ENCODE measurements at regions of chrX and their contacts with region 1.

Region 1: DNA sequence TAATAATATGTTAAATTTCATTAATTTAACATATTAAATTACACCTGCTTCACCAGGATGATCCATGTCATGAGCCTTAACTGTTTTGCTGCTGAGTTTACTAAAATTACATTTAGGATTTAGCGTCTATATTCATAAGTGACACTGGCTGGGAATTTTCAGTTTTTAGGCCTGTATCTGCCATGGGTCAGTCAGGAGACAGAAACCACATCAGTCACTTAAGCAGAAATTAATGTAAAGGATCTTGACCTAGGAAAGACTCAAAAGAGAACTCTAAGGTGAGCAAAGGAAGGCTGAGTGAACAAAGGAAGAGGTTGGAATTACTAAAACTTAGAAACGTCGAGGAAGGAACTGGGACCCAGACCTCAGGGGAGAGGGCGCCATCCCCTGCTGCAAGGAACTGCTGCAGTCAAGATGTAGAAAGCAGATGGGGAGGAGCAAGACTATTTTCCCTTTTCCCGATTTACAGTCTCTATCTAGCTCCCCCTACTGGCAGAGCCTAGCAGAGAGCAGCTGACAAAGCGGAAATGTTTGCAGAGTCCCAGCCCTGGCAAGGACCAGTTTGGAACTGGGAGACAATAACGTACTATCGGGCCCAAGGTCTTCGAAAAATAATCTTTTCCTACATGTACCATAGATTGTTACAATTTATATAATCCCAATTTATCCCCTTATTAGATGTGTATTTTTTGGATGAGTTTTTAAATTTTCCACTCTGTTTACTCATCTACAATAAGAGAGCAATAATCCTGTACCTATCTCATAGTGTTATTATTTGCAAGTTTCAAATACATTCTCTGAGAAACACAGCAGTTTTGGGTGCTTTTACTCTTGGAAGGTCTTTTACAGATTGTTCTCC is 22.6 kb upstream of the RBBP7 start:
- DNase-seq: peak; percentile 71 to 77
- ATAC-seq: peak; percentile 88
- H3K4me3 ChIP-seq: no peak overlapping the region
- H3K27ac ChIP-seq: no peak overlapping the region
- H3K4me1 ChIP-seq: no peaks in the 10 kb centered on the region
- H3K27me3 ChIP-seq: no peaks in the 10 kb centered on the region

Region 2: DNA sequence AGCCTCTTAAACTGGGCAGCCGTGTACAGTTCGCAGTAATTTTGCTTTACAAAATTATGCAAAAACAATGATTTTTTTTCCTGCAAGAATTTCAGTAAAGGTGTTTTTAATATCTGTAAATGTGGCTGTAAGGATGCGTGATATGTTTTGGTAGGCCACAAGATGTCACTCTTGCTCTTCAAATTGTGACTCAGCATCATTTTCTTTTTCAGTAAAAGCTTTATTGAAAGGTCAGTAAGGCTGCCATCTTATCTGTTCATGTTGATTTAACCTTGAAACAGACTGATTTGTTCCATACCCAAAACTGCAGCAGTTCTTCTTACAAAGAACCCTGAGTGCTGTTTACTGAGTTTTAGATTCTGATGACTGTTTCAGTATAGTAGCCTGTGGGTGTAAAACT is 66.5 kb before region 1 on chrX:
- intact Hi-C with region 1: loop called in 1 of 2 experiments (anchors 2 kb)
- DNase-seq: no peak
- ATAC-seq: no peak
- H3K4me3 ChIP-seq: no peak overlapping the region
- H3K27ac ChIP-seq: no peak overlapping the region
- H3K4me1 ChIP-seq: peaks cover 0 to 5% of the 10 kb centered on the region in 2 donors
- H3K27me3 ChIP-seq: no peaks in the 10 kb centered on the region

Region 3: DNA sequence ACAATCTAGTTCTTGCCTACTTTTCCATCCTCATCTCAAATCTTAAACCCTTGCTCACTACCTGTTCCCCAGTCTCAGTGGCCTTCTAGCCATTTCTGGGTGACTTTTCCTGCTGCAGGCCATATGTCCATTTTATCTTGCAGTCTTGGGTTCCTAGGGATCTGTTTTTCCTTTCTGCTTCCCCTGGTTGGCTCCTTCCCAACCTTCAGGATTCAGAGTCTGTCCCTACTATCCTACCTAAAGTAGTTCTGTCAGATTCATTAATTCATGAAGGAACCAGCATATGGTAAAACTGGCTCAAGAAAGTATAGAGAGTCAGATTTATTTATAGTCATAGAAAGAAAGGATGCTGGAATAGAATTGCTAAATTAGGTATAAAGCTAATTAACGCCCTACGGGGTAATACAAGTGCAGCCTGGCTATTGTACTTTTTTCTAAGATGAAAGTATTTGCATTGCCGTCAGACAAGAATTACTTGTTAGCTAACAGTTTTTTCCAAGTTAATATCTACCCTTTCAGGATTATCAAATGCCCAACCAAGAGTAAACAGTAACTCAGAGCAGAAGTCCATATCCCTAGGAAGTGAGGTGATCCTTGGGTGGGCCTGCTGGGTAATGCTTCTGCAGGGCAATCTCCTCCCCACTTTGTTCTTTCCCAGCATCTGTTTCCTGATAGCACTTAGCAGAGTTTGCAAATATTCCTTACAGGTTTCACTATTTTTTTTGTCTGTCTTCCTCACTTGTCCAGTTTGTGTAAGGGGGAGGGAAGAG is 117.3 kb after region 1 on chrX:
- intact Hi-C with region 1: no loop called
- DNase-seq: no peak
- ATAC-seq: no peak
- H3K4me3 ChIP-seq: no peak overlapping the region
- H3K27ac ChIP-seq: no peak overlapping the region
- H3K4me1 ChIP-seq: peaks cover 0 to 4% of the 10 kb centered on the region in 2 donors
- H3K27me3 ChIP-seq: no peaks in the 10 kb centered on the region

Region 4: DNA sequence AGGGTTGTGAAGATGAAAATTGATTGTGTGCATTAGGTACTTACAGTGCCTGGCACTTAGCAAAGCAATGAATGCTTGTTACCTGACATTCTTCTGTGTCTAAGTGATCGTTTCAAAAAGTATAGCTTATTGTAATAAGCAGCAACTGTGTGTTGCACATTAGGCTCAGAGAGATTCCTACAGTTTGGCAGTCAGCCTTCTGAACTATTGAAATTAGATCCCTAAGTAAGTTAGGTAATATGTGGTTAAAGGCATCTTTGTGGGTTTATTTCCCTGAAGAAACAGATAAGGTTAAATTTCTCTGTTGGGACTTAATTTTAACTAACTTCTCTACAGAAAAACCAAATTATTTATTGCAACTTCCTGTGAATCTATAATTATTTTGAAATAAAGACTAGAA is 147.1 kb after region 1 on chrX:
- intact Hi-C with region 1: loop called in 1 of 2 experiments (anchors 5 kb)
- DNase-seq: no peak
- ATAC-seq: no peak
- H3K4me3 ChIP-seq: no peak overlapping the region
- H3K27ac ChIP-seq: no peak overlapping the region
- H3K4me1 ChIP-seq: no peaks in the 10 kb centered on the region
- H3K27me3 ChIP-seq: no peaks in the 10 kb centered on the region